Esophagus squamous epithelium (tissue), 5 donors: ENCODE measurements at regions of chr6 and their contacts with region 1.

Region 1: GRCh38 chr6:31834434-31835198 is 7.1 kb downstream of the HSPA1B start:
- DNase-seq: peak; percentile 21
- H3K4me3 ChIP-seq: peak overlapping the region; percentile 81 to 99 (median 90)
- H3K27ac ChIP-seq: peak overlapping the region; percentile 92 to 98 (median 96)
- H3K4me1 ChIP-seq: peaks cover 22 to 83% (median 54%) of the 10 kb centered on the region in 3 donors
- H3K27me3 ChIP-seq: no peaks in the 10 kb centered on the region
- CTCF ChIP-seq: no peak
- POLR2A ChIP-seq: peak in 3 of 4 donors; percentile 4 to 57 (median 56)

Region 2: GRCh38 chr6:31680840-31681671 is 153.6 kb before region 1 on chr6 and contains the start of gene LY6G5C:
- intact Hi-C with region 1: loop called (anchors 10 kb)
- DNase-seq: peak; percentile 33
- H3K4me3 ChIP-seq: peak within 1 kb of the TSS; percentile 43 to 69 (median 62)
- H3K27ac ChIP-seq: peak within 1 kb of the TSS; percentile 65 to 85 (median 74)
- H3K4me1 ChIP-seq: peaks cover 4 to 36% (median 16%) of the 10 kb centered on the region in 3 donors
- H3K27me3 ChIP-seq: no peaks in the 10 kb centered on the region
- CTCF ChIP-seq: peak; percentile 38 to 85 (median 73)
- POLR2A ChIP-seq: peak in 1 of 4 donors; percentile 21
- total RNA-seq, gene LY6G5C: 0.57 to 0.83 TPM in 2 of 4 donors, not detected in the others

Region 3: GRCh38 chr6:31739639-31740396 is 94.8 kb before region 1 on chr6 and contains the start of gene MSH5:
- intact Hi-C with region 1: loop called (anchors 10 kb)
- DNase-seq: peak; percentile 90
- H3K4me3 ChIP-seq: peak within 1 kb of the TSS; percentile 56 to 81 (median 72)
- H3K27ac ChIP-seq: peak within 1 kb of the TSS; percentile 94 to 99 (median 98)
- H3K4me1 ChIP-seq: peaks cover 27 to 45% (median 36%) of the 10 kb centered on the region in 3 donors
- H3K27me3 ChIP-seq: no peaks in the 10 kb centered on the region
- CTCF ChIP-seq: peak in 2 of 6 experiments; percentile 1 to 3
- POLR2A ChIP-seq: peak in 2 of 4 donors; percentile 31 to 83
- total RNA-seq, gene MSH5: 2.3 to 7.9 (median 6.8) TPM